Tibial artery (tissue), 4 donors: ENCODE measurements at regions of chrX and their contacts with region 1.

Region 1: GRCh38 chrX:154401045-154401799 is 3.0 kb downstream of the RPL10 start:
- DNase-seq: no peak
- H3K4me3 ChIP-seq: no peak overlapping the region
- H3K27ac ChIP-seq: no peak overlapping the region
- H3K4me1 ChIP-seq: peaks cover 0 to 19% (median 12%) of the 10 kb centered on the region in 4 donors
- H3K27me3 ChIP-seq: no peaks in the 10 kb centered on the region
- CTCF ChIP-seq: no peak

Region 2: GRCh38 chrX:154534862-154535670 is 133.8 kb after region 1 on chrX:
- intact Hi-C with region 1: loop called (anchors 5 kb)
- DNase-seq: peak; percentile 80 to 91
- H3K4me3 ChIP-seq: no peak overlapping the region
- H3K27ac ChIP-seq: peak overlapping the region in 1 of 2 donors; percentile 70
- H3K4me1 ChIP-seq: peaks cover 0 to 25% (median 9%) of the 10 kb centered on the region in 4 donors
- H3K27me3 ChIP-seq: no peaks in the 10 kb centered on the region
- CTCF ChIP-seq: peak; percentile 87 to 97